ENCODE measurements at regions of chr11 and their contacts with region 1.

Region 1: GRCh38 chr11:122197055-122197987 is 81.3 kb upstream of the BLID start:
- DNase-seq: peak; percentile 96
- H3K4me3 ChIP-seq: peak overlapping the region in 1 of 3 experiments; percentile 26
- H3K27ac ChIP-seq: peak overlapping the region; percentile 95
- H3K4me1 ChIP-seq: peaks cover 69% of the 10 kb centered on the region
- H3K27me3 ChIP-seq: no peaks in the 10 kb centered on the region
- CTCF ChIP-seq: no peak
- POLR2A ChIP-seq: peak; percentile 82

Region 2: GRCh38 chr11:121909596-121909995 is 287.7 kb before region 1 on chr11:
- CTCF ChIA-PET with region 1: no interaction called
- POLR2A ChIA-PET with region 1: no interaction called
- dilution Hi-C with region 1: no loop called
- intact Hi-C with region 1: no loop called
- DNase-seq: no peak
- H3K4me3 ChIP-seq: no peak overlapping the region
- H3K27ac ChIP-seq: no peak overlapping the region
- H3K4me1 ChIP-seq: no peaks in the 10 kb centered on the region
- H3K27me3 ChIP-seq: peaks cover 0 to 2% of the 10 kb centered on the region in 2 experiments
- CTCF ChIP-seq: no peak
- POLR2A ChIP-seq: no peak

Region 3: GRCh38 chr11:122179961-122180834 is 17.1 kb before region 1 on chr11:
- CTCF ChIA-PET with region 1: interaction called, 22 read pairs
- POLR2A ChIA-PET with region 1: no interaction called
- dilution Hi-C with region 1: no loop called
- intact Hi-C with region 1: loop called (anchors 1 kb)
- DNase-seq: peak; percentile 87
- H3K4me3 ChIP-seq: peak overlapping the region; percentile 29 to 100 (median 99)
- H3K27ac ChIP-seq: peak overlapping the region; percentile 86
- H3K4me1 ChIP-seq: peaks cover 66% of the 10 kb centered on the region
- H3K27me3 ChIP-seq: no peaks in the 10 kb centered on the region
- CTCF ChIP-seq: no peak
- POLR2A ChIP-seq: peak; percentile 84